B cell (primary cell): ENCODE measurements at regions of chr7 and their contacts with region 1.

Region 1: DNA sequence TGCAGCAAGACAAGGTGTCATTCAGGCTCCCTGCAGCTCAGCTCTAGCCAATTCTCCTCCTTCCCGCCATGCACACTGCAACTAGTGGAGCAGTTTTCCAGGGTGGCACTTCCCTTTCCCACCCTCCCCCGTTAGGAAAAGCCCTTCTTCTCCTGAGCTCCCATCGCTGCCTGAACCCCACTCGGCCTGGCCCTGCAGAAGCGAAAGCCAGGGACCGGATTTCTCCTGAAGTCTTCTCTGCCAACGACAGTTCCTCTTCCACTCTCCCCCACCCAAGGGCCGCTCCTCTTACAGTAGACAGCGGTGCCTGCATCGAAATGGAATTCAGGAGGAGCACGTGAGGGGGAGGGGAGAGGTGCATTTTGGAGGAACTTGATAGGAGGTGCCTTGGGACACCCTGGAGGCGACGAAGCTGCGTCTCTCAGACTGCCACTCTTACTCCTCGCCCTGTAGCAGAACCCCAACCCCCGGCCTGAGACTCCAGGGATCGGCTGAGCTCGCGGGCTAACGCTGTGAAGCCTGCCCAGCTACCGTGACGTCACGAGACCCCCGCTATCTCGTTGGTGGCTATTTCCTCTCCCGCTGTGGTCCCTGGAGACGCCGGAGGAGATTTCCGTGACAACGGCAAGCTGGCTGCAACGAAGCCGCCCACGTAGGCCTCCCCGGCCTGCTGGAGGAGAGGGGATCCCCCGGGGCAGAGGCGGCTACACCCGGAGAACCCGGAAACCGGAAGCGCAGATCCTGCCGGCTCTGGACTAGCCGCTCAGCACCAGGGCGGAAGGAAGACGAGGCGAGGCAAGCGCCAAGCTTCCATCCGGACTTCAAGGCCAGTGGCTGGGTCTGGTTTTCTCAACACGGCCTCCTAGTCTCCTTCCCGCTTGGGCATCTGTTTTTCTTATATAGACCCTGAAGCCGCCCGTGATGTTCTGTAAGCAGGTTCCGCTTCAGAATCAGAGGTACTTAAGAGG is 109.7 kb downstream of the RALA start:
- DNase-seq: peak; percentile 99
- ATAC-seq: peak; percentile 94
- H3K4me3 ChIP-seq: peak overlapping the region; percentile 17 to 90 (median 75)
- H3K4me3 Mint-ChIP-seq: peak overlapping the region; percentile 89
- H3K27ac ChIP-seq: peak overlapping the region; percentile 82 to 86
- H3K27ac Mint-ChIP-seq: peak overlapping the region; percentile 94
- H3K4me1 ChIP-seq: peaks cover 33 to 45% of the 10 kb centered on the region in 2 donors
- H3K4me1 Mint-ChIP-seq: peaks cover 47% of the 10 kb centered on the region
- H3K27me3 ChIP-seq: no peaks in the 10 kb centered on the region
- H3K27me3 Mint-ChIP-seq: no peaks in the 10 kb centered on the region
- CTCF ChIP-seq: no peak

Region 2: GRCh38 chr7:38178004-38178694 is 1555.0 kb before region 1 on chr7 and contains the start of gene STARD3NL:
- CTCF ChIA-PET with region 1: no interaction called
- POLR2A ChIA-PET with region 1: no interaction called
- intact Hi-C with region 1: loop called (anchors 10 kb)
- DNase-seq: peak; percentile 98
- ATAC-seq: peak; percentile 95
- H3K4me3 ChIP-seq: peak within 1 kb of the TSS; percentile 36 to 98 (median 91)
- H3K4me3 Mint-ChIP-seq: peak within 1 kb of the TSS; percentile 97
- H3K27ac ChIP-seq: peak within 1 kb of the TSS; percentile 81 to 93
- H3K27ac Mint-ChIP-seq: peak within 1 kb of the TSS; percentile 95
- H3K4me1 ChIP-seq: peaks cover 16 to 17% of the 10 kb centered on the region in 2 donors
- H3K4me1 Mint-ChIP-seq: peaks cover 33% of the 10 kb centered on the region
- H3K27me3 ChIP-seq: no peaks in the 10 kb centered on the region
- H3K27me3 Mint-ChIP-seq: no peaks in the 10 kb centered on the region
- CTCF ChIP-seq: no peak
- total RNA-seq, gene STARD3NL: 13.4 and 14.2 TPM in 2 replicates

Region 3: GRCh38 chr7:39566023-39566921 is 166.8 kb before region 1 on chr7 and contains the start of gene YAE1:
- CTCF ChIA-PET with region 1: no interaction called
- POLR2A ChIA-PET with region 1: interaction called, 7 read pairs
- intact Hi-C with region 1: loop called (anchors 1 kb)
- DNase-seq: peak; percentile 86
- ATAC-seq: peak; percentile 96
- H3K4me3 ChIP-seq: peak within 1 kb of the TSS; percentile 72 to 90 (median 89)
- H3K4me3 Mint-ChIP-seq: peak within 1 kb of the TSS; percentile 100
- H3K27ac ChIP-seq: peak within 1 kb of the TSS; percentile 65 to 79
- H3K27ac Mint-ChIP-seq: peak within 1 kb of the TSS; percentile 96
- H3K4me1 ChIP-seq: peaks cover 10 to 12% of the 10 kb centered on the region in 2 donors
- H3K4me1 Mint-ChIP-seq: peaks cover 21% of the 10 kb centered on the region
- H3K27me3 ChIP-seq: no peaks in the 10 kb centered on the region
- H3K27me3 Mint-ChIP-seq: peaks cover 1% of the 10 kb centered on the region
- CTCF ChIP-seq: no peak
- total RNA-seq, gene YAE1: 20.0 and 22.9 TPM in 2 replicates

Region 4: GRCh38 chr7:39623018-39623731 is 109.9 kb before region 1 on chr7 and contains the start of gene RALA:
- CTCF ChIA-PET with region 1: interaction called, 5 read pairs
- POLR2A ChIA-PET with region 1: interaction called, 9 read pairs
- intact Hi-C with region 1: loop called (anchors 1 kb)
- DNase-seq: peak; percentile 90
- ATAC-seq: peak; percentile 90
- H3K4me3 ChIP-seq: peak within 1 kb of the TSS; percentile 82 to 97 (median 84)
- H3K4me3 Mint-ChIP-seq: peak within 1 kb of the TSS; percentile 95
- H3K27ac ChIP-seq: peak within 1 kb of the TSS; percentile 86 to 93
- H3K27ac Mint-ChIP-seq: peak within 1 kb of the TSS; percentile 92
- H3K4me1 ChIP-seq: peaks cover 24 to 26% of the 10 kb centered on the region in 2 donors
- H3K4me1 Mint-ChIP-seq: peaks cover 53% of the 10 kb centered on the region
- H3K27me3 ChIP-seq: no peaks in the 10 kb centered on the region
- H3K27me3 Mint-ChIP-seq: no peaks in the 10 kb centered on the region
- CTCF ChIP-seq: no peak
- total RNA-seq, gene RALA: 29.8 and 31.0 TPM in 2 replicates

Region 5: GRCh38 chr7:39650676-39651075 is 82.4 kb before region 1 on chr7:
- CTCF ChIA-PET with region 1: no interaction called
- POLR2A ChIA-PET with region 1: no interaction called
- intact Hi-C with region 1: no loop called
- DNase-seq: no peak
- ATAC-seq: no peak
- H3K4me3 ChIP-seq: no peak overlapping the region
- H3K4me3 Mint-ChIP-seq: no peak overlapping the region
- H3K27ac ChIP-seq: no peak overlapping the region
- H3K27ac Mint-ChIP-seq: no peak overlapping the region
- H3K4me1 ChIP-seq: no peaks in the 10 kb centered on the region
- H3K4me1 Mint-ChIP-seq: peaks cover 14% of the 10 kb centered on the region
- H3K27me3 ChIP-seq: no peaks in the 10 kb centered on the region
- H3K27me3 Mint-ChIP-seq: no peaks in the 10 kb centered on the region
- CTCF ChIP-seq: no peak

Region 6: DNA sequence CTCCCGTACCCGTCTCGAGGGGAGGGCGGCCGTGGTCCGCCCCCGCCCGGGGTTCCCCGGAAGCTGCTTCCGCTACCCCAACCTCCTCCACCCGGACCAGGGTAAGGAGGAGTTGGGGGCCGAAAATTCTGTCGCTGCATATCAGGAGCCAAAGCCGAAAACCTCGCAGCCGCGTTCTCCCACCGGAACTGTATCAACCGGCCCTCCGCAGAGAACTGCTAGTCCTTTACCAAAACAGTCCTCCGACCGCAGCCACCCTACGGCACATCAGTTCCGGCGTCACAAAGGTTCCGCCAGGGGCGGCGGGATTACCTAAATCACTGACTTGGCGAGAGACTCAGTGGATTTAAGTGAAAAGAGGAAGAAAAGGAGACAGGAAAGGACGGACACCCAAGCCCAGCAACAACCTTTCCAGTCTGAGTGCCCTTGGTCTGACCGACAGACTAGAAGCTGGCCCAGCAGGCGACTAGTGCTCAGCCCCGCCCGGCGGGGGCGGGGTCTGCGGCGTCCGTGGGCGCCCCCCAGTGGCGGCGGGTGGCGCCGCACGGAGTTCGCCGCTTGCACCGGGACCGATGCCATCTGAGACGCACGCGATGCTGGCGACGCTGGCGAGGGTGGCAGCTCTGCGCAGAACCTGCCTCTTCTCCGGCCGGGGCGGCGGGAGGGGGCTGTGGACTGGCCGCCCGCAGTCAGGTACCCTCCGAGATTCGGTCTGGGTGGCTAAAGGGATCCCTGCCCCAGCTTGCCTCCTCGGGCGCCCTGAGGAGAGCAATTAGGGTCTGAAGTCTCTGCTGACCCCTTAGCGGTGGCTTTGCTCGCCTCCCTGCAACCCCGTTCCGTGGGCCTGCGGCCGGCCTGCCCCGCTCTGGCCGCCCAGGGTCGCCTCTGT is 401.6 kb after region 1 on chr7 and contains the starts of genes MPLKIP and SUGCT:
- CTCF ChIA-PET with region 1: interaction called, 6 read pairs
- POLR2A ChIA-PET with region 1: interaction called, 3 read pairs
- intact Hi-C with region 1: loop called (anchors 1 kb)
- DNase-seq: peak; percentile 97
- ATAC-seq: peak; percentile 91
- H3K4me3 ChIP-seq: peak within 1 kb of the TSS; percentile 87 to 95 (median 94)
- H3K4me3 Mint-ChIP-seq: peak within 1 kb of the TSS; percentile 95
- H3K27ac ChIP-seq: peak within 1 kb of the TSS; percentile 84 to 91
- H3K27ac Mint-ChIP-seq: peak within 1 kb of the TSS; percentile 98
- H3K4me1 ChIP-seq: peaks cover 18 to 22% of the 10 kb centered on the region in 2 donors
- H3K4me1 Mint-ChIP-seq: peaks cover 30% of the 10 kb centered on the region
- H3K27me3 ChIP-seq: peaks cover 0 to 3% (median 0%) of the 10 kb centered on the region in 4 experiments
- H3K27me3 Mint-ChIP-seq: peaks cover 3% of the 10 kb centered on the region
- CTCF ChIP-seq: peak; percentile 99
- total RNA-seq, gene MPLKIP: 31.4 and 34.1 TPM in 2 replicates
- total RNA-seq, gene SUGCT: 0.86 and 2.6 TPM in 2 replicates